ENCODE measurements at regions of chr7 and their contacts with region 1.

Region 1: GRCh38 chr7:108114117-108114841 is 15.9 kb downstream of the LAMB4 start:
- DNase-seq: peak; percentile 13
- H3K4me3 Mint-ChIP-seq: no peak overlapping the region
- H3K27ac Mint-ChIP-seq: no peak overlapping the region
- H3K4me1 Mint-ChIP-seq: no peaks in the 10 kb centered on the region
- H3K27me3 Mint-ChIP-seq: peaks cover 2% of the 10 kb centered on the region

Region 2: GRCh38 chr7:107879400-107880035 is 234.8 kb before region 1 on chr7:
- CTCF ChIA-PET with region 1: no interaction called
- POLR2A ChIA-PET with region 1: no interaction called
- intact Hi-C with region 1: no loop called
- DNase-seq: peak; percentile 47
- H3K4me3 Mint-ChIP-seq: no peak overlapping the region
- H3K27ac Mint-ChIP-seq: peak overlapping the region; percentile 24
- H3K4me1 Mint-ChIP-seq: peaks cover 20% of the 10 kb centered on the region
- H3K27me3 Mint-ChIP-seq: no peaks in the 10 kb centered on the region

Region 3: GRCh38 chr7:108083980-108084379 is 30.3 kb before region 1 on chr7:
- CTCF ChIA-PET with region 1: no interaction called
- POLR2A ChIA-PET with region 1: no interaction called
- intact Hi-C with region 1: no loop called
- DNase-seq: no peak
- H3K4me3 Mint-ChIP-seq: no peak overlapping the region
- H3K27ac Mint-ChIP-seq: no peak overlapping the region
- H3K4me1 Mint-ChIP-seq: no peaks in the 10 kb centered on the region
- H3K27me3 Mint-ChIP-seq: no peaks in the 10 kb centered on the region

Region 4: GRCh38 chr7:108146070-108146837 is 32.0 kb after region 1 on chr7:
- CTCF ChIA-PET with region 1: interaction called, 24 read pairs
- POLR2A ChIA-PET with region 1: no interaction called
- intact Hi-C with region 1: loop called (anchors 1 kb)
- DNase-seq: peak; percentile 48
- H3K4me3 Mint-ChIP-seq: no peak overlapping the region
- H3K27ac Mint-ChIP-seq: no peak overlapping the region
- H3K4me1 Mint-ChIP-seq: no peaks in the 10 kb centered on the region
- H3K27me3 Mint-ChIP-seq: peaks cover 10% of the 10 kb centered on the region